Spleen (tissue), 13 donors: ENCODE measurements at regions of chr1 and their contacts with region 1.

Region 1: GRCh38 chr1:24688621-24689195 is 45.6 kb downstream of the SRRM1 start:
- DNase-seq: peak; percentile 86
- H3K4me3 ChIP-seq: no peak overlapping the region
- H3K27ac ChIP-seq: no peak overlapping the region
- H3K4me1 ChIP-seq: peaks cover 0 to 13% (median 7%) of the 10 kb centered on the region in 6 donors
- H3K27me3 ChIP-seq: no peaks in the 10 kb centered on the region
- CTCF ChIP-seq: peak; percentile 63 to 92 (median 83)
- POLR2A ChIP-seq: no peak

Region 2: GRCh38 chr1:24622218-24622617 is 66.5 kb before region 1 on chr1:
- intact Hi-C with region 1: no loop called
- DNase-seq: no peak
- H3K4me3 ChIP-seq: no peak overlapping the region
- H3K27ac ChIP-seq: no peak overlapping the region
- H3K4me1 ChIP-seq: no peaks in the 10 kb centered on the region
- H3K27me3 ChIP-seq: peaks cover 0 to 21% (median 0%) of the 10 kb centered on the region in 7 donors
- CTCF ChIP-seq: no peak
- POLR2A ChIP-seq: no peak

Region 3: DNA sequence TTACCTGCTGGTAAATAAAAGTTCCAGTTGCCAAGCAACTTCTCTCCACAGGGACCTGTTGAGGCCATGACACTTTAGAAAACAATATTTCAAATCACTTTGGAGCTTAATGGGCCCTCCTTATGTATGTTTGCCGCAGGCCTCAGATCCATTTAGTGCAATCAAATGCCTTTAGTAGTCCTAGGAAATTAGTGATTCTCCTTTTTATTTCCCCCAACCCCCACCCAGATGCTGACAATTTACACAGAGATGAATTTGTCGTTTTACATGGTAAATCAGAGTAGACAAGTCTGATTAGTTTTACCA is 140.1 kb after region 1 on chr1:
- intact Hi-C with region 1: loop called (anchors 2 kb)
- DNase-seq: no peak
- H3K4me3 ChIP-seq: no peak overlapping the region
- H3K27ac ChIP-seq: no peak overlapping the region
- H3K4me1 ChIP-seq: peaks cover 0 to 68% (median 23%) of the 10 kb centered on the region in 6 donors
- H3K27me3 ChIP-seq: no peaks in the 10 kb centered on the region
- CTCF ChIP-seq: no peak
- POLR2A ChIP-seq: no peak